H1 (cell line): ENCODE measurements at regions of chr15 and their contacts with region 1.

Region 1: DNA sequence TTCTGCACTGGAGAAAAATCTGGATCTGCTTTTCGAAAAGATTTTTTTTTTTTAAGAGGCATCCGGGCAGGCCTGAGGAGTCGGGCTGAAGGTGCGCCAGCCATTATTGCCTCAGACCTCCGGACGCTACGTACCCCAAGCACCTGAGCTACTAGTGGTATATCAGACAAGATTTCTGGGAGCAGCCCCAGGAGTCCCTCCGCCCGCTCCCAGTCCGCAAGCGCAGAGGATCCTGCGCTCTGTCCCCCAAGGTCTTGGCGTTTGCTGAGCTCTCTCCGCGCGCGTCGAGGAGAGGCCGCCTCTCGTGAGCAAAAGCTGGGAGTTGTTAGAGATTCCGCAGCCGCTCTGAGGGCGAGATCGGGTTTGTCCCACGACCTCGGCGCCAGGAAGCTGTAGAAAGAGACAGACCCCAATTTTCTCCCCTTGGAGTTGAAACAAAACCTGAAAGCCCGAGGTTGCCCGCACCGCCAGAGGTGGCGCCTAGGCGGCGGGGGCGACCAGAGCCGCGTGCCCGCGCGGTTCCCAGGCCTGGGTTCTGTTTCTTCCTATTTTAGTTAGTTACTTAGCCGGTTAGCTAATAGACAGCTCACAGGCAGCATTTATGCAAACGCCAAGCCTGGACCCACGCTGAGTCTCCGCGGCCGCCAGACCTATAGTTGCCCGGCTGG is 72.5 kb upstream of the POLG start:
- DNase-seq: no peak
- H3K4me3 ChIP-seq: peak overlapping the region in 1 of 4 experiments; percentile 40; a peak in 2 of 8 replicates
- H3K27ac ChIP-seq: no peak overlapping the region
- H3K4me1 ChIP-seq: peaks cover 3 to 54% (median 31%) of the 10 kb centered on the region in 4 experiments
- H3K27me3 ChIP-seq: peaks cover 97 to 100% (median 99%) of the 10 kb centered on the region in 4 experiments
- CTCF ChIP-seq: peak; percentile 22 to 36 (median 27); a peak in 3 of 4 replicates
- EP300 ChIP-seq: no peak
- POLR2A ChIP-seq: no peak
- RAD21 ChIP-seq: no peak

Region 2: DNA sequence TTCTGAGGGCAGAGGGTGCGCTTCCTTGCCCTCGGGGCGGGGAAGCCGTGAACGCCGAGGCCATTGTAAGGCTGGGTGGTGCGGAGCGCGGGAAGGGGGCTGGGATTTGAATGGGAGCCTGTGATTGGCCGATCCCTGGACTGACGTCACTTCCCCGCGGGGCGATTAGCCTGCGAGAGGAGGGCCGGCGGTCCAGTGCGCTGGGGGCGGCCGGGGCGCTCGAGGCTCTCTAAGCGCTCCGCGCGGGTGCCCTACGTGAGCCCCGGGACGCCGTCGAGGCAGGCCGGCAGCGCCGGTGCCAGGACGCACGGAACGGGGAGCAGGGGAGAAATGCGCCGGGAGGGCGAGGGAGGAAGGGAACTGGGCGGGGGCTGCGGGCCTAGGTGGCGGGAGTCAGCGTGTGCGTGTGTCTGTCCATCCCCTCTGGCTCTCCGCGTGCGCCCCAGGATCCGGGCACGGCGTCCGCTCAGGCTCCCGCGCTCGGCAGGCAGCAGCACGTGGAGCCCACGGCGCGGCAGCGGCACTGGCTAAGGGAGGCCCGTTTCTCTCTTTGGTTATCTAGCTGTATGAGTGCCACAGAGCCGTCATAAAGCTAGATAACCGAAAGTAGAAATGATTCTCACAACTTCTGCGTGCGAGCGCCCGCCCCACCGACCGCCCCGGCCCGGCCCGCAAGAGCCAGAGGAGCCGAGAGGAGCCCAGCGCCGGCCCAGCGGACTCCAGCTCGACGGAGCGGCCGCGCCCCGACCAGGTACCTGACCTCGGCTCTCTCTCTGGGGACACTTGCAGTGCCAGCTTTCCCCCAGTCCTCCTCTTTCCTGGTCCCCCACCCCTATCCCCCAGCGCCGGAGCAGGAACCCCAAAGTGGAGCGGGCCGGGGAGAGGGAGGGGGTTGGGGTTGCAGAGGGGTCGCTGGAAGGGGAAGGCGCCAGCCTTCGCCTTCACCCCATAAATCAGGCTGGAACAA is 39.3 kb before region 1 on chr15:
- CTCF ChIA-PET with region 1: no interaction called
- POLR2A ChIA-PET with region 1: interaction called, 26 read pairs
- DNase-seq: peak in 1 of 2 experiments; percentile 88
- H3K4me3 ChIP-seq: peak overlapping the region in 3 of 4 experiments; percentile 14 to 50 (median 29); a peak in 5 of 8 replicates
- H3K27ac ChIP-seq: no peak overlapping the region
- H3K4me1 ChIP-seq: peaks cover 3 to 32% (median 19%) of the 10 kb centered on the region in 4 experiments
- H3K27me3 ChIP-seq: peaks cover 98 to 100% (median 100%) of the 10 kb centered on the region in 4 experiments
- CTCF ChIP-seq: no peak
- EP300 ChIP-seq: no peak
- POLR2A ChIP-seq: no peak
- RAD21 ChIP-seq: no peak

Region 3: GRCh38 chr15:89430530-89431341 is 23.7 kb after region 1 on chr15:
- CTCF ChIA-PET with region 1: interaction called, 11 read pairs
- POLR2A ChIA-PET with region 1: no interaction called
- DNase-seq: peak in 1 of 2 experiments; percentile 100
- H3K4me3 ChIP-seq: peak overlapping the region in 3 of 4 experiments; percentile 29 to 54 (median 41); a peak in 7 of 8 replicates
- H3K27ac ChIP-seq: no peak overlapping the region
- H3K4me1 ChIP-seq: peaks cover 0 to 9% (median 2%) of the 10 kb centered on the region in 4 experiments; a peak in 3 of 7 replicates
- H3K27me3 ChIP-seq: peaks cover 0 to 22% (median 13%) of the 10 kb centered on the region in 4 experiments; a peak in 6 of 7 replicates
- CTCF ChIP-seq: peak; percentile 97 to 99 (median 98)
- EP300 ChIP-seq: no peak
- POLR2A ChIP-seq: no peak
- RAD21 ChIP-seq: peak; percentile 84 to 90